ENCODE measurements at regions of chr1 and their contacts with region 1.

Region 1: DNA sequence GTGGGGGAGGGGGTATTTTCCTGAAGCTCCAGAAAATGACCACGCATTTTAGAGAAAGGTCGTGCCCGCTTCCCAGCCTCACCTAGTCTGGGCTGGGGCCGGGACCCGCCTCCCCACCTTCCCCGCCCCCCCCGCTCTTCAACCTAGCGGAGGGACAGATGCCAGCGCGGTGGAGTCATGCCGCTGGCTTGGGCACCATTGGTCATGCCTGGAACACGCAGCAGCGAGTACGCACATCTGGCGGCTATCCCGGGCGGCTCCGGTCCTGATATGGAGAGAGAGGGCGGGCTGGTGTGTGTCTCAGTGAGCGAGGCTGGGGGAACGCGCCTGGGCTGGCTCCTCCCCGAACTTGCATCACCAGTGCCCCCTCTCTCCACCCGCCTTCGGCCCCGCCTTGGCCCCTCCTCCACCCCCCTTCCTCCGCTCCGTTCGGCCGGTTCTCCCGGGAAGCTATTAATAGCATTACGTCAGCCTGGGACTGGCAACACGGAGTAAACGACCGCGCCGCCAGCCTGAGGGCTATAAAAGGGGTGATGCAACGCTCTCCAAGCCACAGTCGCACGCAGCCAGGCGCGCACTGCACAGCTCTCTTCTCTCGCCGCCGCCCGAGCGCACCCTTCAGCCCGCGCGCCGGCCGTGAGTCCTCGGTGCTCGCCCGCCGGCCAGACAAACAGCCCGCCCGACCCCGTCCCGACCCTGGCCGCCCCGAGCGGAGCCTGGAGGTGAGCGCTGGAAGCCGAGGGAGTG is at the start of gene ATF3:
- DNase-seq: peak; percentile 96
- H3K4me3 Mint-ChIP-seq: peak within 1 kb of the TSS; percentile 94
- H3K27ac Mint-ChIP-seq: peak within 1 kb of the TSS; percentile 95
- H3K4me1 Mint-ChIP-seq: peaks cover 51% of the 10 kb centered on the region
- H3K27me3 Mint-ChIP-seq: peaks cover 66% of the 10 kb centered on the region

Region 2: DNA sequence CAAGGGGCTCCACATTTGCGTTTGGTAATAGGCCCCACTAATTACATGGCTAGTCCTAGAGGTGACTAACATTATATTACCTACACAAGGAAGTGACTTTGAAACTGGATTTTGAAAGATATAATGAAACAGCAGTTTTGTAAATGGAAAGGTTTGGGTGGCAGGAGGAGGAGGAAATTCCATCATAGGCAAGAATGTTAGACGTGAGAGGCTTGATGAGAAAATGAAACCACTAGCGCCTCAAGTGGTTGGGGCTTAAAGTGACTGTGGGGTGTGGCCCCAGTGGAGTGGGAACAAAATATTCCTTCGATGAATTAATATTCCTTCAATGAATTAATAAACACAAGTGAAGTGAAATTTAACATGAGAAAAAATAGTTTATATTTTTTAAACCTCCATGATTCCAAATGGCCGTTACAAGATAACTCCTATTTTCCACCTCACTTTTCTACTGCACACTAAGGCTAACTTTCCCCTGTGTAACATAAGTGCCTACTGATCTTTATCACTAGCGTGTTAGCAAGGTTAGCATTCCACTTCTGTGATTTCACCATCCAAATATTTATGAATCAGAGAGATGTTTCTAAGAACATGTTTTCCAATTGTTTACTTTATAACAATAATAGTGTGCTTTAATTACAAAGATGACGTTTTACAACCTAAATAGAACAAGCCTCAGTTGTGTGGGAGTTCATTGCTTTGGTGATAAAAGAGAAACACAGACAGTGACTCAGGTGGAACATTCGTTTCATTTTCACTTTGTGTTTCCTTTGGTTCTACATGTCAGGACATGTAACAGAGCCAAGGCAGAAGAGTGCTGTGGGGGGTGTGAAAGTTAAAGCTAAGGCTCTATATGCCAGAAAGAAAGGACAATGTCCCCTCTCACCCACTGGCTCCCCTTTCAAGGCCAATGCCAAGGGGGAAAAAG is 12.3 kb before region 1 on chr1:
- CTCF ChIA-PET with region 1: interaction called, 17 read pairs
- DNase-seq: peak; percentile 63
- H3K4me3 Mint-ChIP-seq: peak overlapping the region; percentile 77
- H3K27ac Mint-ChIP-seq: peak overlapping the region; percentile 98
- H3K4me1 Mint-ChIP-seq: peaks cover 31% of the 10 kb centered on the region
- H3K27me3 Mint-ChIP-seq: peaks cover 17% of the 10 kb centered on the region